Transverse colon (tissue), 4 donors: ENCODE measurements at regions of chr9 and their contacts with region 1.

Region 1: DNA sequence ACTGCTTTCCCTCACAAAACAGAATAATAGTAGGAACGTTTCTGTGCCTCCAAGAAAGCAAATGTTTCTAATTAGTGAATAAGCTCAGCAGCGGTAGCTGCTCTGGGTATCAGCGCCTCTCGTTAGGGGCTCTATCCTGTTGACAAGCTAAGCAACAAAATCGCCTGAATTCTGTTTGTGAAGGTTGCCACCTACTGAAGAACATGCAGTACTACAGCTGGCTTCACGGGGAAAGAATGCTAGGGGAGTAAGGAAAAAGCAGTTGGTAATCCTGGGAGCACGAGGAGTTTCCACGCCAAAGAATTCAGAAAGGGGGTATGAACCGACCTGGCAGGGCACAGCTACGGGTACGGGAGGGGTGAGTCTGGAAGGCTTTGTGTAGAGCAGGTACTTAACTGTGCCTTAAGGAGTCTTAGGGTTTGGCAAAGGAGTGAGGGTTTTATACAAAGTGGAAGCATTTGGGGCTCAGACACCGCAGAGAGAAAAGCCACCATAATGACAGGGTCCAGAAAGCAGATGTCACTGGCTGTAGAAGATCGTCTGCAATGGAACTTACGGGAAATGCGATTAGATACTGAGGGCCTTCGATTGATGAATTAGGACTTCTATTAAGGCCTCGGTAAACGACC is 171.7 kb downstream of the TTC39B start:
- DNase-seq: peak; percentile 49
- H3K4me3 ChIP-seq: peak overlapping the region in 1 of 4 donors; percentile 23
- H3K27ac ChIP-seq: no peak overlapping the region
- H3K4me1 ChIP-seq: peaks cover 0 to 11% (median 5%) of the 10 kb centered on the region in 4 donors
- H3K27me3 ChIP-seq: no peaks in the 10 kb centered on the region
- CTCF ChIP-seq: peak; percentile 77 to 91 (median 90)
- EP300 ChIP-seq: no peak
- POLR2A ChIP-seq: no peak

Region 2: GRCh38 chr9:14616188-14616982 is 518.9 kb before region 1 on chr9:
- in situ Hi-C with region 1: loop called in 1 of 4 experiments (anchors 25 kb)
- intact Hi-C with region 1: no loop called
- DNase-seq: no peak
- H3K4me3 ChIP-seq: no peak overlapping the region
- H3K27ac ChIP-seq: no peak overlapping the region
- H3K4me1 ChIP-seq: peaks cover 0 to 6% (median 3%) of the 10 kb centered on the region in 4 donors
- H3K27me3 ChIP-seq: no peaks in the 10 kb centered on the region
- CTCF ChIP-seq: peak; percentile 57 to 68 (median 62)
- EP300 ChIP-seq: no peak
- POLR2A ChIP-seq: no peak

Region 3: DNA sequence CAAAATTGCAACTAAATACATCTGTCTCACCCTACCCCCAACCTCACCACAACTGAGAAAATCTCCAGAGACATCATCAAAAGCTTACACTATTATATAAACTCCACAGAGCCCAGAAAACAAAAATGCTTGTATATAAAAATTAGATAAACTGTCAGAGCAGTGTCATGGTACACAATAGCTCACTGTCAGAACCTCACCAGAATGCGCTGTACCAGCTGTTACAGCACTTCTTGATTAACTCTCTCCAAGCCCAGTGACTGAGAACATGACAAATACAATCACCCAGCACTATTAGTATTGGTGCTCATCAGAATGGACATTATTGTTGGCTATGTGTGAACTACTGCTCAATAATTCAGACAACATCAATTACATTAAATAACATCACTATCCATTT is 507.8 kb before region 1 on chr9:
- in situ Hi-C with region 1: loop called in 2 of 4 experiments (anchors 25 kb)
- intact Hi-C with region 1: no loop called
- DNase-seq: no peak
- H3K4me3 ChIP-seq: no peak overlapping the region
- H3K27ac ChIP-seq: no peak overlapping the region
- H3K4me1 ChIP-seq: peaks cover 0 to 15% (median 2%) of the 10 kb centered on the region in 4 donors
- H3K27me3 ChIP-seq: no peaks in the 10 kb centered on the region
- CTCF ChIP-seq: no peak
- EP300 ChIP-seq: no peak
- POLR2A ChIP-seq: no peak

Region 4: DNA sequence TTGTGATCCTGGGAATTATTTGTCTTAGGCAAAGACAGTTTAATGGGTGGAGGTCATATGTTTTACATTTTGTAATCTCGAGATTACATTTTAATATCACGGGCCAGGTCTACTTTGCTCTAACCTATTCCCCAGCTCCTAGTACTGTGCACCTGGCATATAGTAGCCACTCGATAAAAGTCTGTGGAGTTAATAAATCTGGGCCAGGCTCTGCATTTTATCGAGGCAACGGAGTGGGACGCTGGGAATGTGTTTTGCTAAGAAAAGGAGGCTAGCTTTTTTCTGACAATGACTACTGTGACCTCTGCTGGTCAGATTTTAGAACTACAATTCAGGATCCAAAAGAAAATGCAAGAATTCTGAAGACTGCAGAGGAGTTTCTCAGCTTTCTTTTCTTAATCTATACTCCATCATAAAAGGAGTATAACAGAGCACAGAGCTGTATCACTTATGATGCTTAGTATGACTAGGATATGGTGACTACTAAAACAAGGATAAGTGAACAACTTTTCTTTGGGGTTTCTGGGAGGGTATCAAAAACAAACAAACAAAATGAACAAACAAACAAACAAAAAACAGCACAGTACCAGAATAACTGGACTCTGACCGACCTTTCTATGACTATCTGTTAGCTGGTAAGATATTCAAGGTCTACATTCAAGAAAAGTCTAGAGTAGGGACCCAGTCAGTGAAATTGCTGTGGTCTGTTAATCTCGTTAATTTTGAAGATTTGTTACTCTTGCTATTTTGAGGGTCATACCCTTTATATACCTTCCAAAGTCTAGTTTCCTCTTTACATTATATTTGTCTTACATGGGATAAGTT is 366.7 kb before region 1 on chr9:
- in situ Hi-C with region 1: loop called in 1 of 4 experiments (anchors 25 kb)
- intact Hi-C with region 1: no loop called
- DNase-seq: no peak
- H3K4me3 ChIP-seq: no peak overlapping the region
- H3K27ac ChIP-seq: no peak overlapping the region
- H3K4me1 ChIP-seq: peaks cover 0 to 4% (median 0%) of the 10 kb centered on the region in 4 donors
- H3K27me3 ChIP-seq: no peaks in the 10 kb centered on the region
- CTCF ChIP-seq: peak; percentile 63 to 74 (median 70)
- EP300 ChIP-seq: no peak
- POLR2A ChIP-seq: no peak

Region 5: GRCh38 chr9:15306757-15307534 is 171.7 kb after region 1 on chr9 and contains the start of gene TTC39B:
- in situ Hi-C with region 1: no loop called
- intact Hi-C with region 1: no loop called
- DNase-seq: peak; percentile 96
- H3K4me3 ChIP-seq: peak within 1 kb of the TSS; percentile 78 to 95 (median 86)
- H3K27ac ChIP-seq: peak within 1 kb of the TSS; percentile 89 to 95 (median 93)
- H3K4me1 ChIP-seq: peaks cover 7 to 23% (median 15%) of the 10 kb centered on the region in 4 donors
- H3K27me3 ChIP-seq: no peaks in the 10 kb centered on the region
- CTCF ChIP-seq: no peak
- EP300 ChIP-seq: no peak
- POLR2A ChIP-seq: peak; percentile 95
- total RNA-seq, gene TTC39B: 23.3 to 62.8 (median 38.1) TPM

Region 6: DNA sequence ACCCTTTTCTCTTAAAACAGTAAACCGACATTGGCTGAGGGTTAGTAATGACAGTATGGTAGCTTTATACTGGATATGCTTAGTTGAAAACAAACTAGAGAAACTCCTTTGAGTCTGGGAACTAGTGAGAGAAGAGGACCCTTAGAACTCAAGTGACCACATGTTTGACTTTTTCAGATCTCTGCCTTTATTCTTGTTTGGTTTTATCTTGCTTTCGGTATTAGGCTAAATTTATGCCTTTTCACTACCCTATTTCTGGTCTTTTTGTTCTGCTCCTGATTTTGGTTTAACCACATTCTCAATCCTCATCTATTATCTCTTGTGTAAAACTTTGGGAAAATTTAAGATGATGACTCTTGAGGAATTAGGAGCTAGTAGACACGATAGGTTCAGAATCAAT is 298.4 kb after region 1 on chr9:
- in situ Hi-C with region 1: no loop called
- intact Hi-C with region 1: no loop called
- DNase-seq: no peak
- H3K4me3 ChIP-seq: no peak overlapping the region
- H3K27ac ChIP-seq: peak overlapping the region in 1 of 4 donors; percentile 19
- H3K4me1 ChIP-seq: peaks cover 3 to 43% (median 26%) of the 10 kb centered on the region in 4 donors
- H3K27me3 ChIP-seq: no peaks in the 10 kb centered on the region
- CTCF ChIP-seq: no peak
- EP300 ChIP-seq: no peak
- POLR2A ChIP-seq: no peak